ENCODE measurements at regions of chr7 and their contacts with region 1.

Region 1: DNA sequence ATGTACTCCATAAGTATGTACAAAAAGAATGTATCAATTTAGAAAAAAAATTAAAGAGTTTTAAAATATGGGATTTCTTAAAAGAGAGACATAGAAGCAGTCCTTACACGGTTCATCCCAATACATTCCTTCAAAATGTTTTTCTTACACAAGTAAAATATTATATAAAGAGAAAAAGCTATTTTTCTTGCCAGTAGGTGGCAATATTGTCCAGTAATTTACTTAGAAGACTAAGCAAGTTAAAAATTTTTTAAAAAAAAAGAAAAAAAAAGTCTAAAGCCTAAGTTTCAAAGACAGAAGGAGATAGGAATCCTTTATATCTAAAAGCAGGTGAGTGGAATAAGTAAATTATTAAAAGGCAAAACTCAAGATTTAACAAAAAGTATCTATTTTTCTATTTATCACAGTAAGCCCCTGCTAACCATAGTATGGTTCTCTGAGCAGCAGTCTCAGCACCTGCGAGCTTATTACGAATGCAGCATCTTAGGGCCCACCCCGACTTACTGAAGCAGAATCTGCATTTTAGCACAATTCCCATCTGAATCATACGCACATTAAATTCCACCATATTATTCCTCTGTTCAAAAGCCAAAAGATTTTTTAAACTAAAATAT is 240.6 kb downstream of the DGKI start:
- DNase-seq: no peak
- H3K4me3 ChIP-seq: no peak overlapping the region; a peak in 1 of 4 replicates
- H3K27ac ChIP-seq: no peak overlapping the region
- H3K4me1 ChIP-seq: no peaks in the 10 kb centered on the region; a peak in 1 of 4 replicates
- H3K27me3 ChIP-seq: no peaks in the 10 kb centered on the region
- CTCF ChIP-seq: peak; percentile 91
- EP300 ChIP-seq: no peak
- RAD21 ChIP-seq: peak; percentile 64

Region 2: DNA sequence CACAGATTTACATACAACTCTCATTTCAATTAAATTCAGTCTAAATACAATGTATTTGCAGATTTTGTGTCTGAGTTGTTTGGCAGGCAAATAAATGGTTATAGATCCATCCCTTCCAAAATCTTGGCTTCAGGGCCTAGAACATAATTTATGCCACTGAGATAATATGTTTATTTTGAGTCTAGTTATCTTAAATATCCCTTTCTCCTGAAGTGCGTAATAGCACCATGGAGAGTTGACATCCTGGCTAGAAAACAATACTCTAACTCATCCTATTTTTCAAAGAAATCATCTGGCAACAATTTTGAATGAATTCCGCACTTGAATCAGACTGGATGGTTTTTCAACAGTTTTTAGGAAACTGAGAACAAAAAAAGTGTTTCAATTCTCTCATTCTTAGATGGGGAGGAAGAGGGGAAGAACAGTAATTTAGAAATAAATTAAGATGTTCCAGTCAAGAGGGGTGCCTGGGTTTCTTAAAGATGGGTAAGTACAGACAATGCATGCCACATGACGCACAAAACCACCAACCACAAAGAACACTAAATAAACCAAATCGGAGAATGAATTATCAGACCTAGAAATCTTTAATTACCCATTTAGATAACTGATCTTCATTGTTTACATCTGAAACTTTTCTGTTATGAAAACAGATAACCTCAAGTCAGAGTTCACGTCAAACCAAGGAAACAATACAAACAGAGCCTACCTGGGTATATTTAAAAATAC is 33.9 kb before region 1 on chr7:
- CTCF ChIA-PET with region 1: no interaction called
- POLR2A ChIA-PET with region 1: no interaction called
- DNase-seq: no peak
- H3K4me3 ChIP-seq: no peak overlapping the region
- H3K27ac ChIP-seq: no peak overlapping the region
- H3K4me1 ChIP-seq: no peaks in the 10 kb centered on the region; a peak in 1 of 4 replicates
- H3K27me3 ChIP-seq: no peaks in the 10 kb centered on the region
- CTCF ChIP-seq: no peak
- EP300 ChIP-seq: no peak
- RAD21 ChIP-seq: no peak

Region 3: DNA sequence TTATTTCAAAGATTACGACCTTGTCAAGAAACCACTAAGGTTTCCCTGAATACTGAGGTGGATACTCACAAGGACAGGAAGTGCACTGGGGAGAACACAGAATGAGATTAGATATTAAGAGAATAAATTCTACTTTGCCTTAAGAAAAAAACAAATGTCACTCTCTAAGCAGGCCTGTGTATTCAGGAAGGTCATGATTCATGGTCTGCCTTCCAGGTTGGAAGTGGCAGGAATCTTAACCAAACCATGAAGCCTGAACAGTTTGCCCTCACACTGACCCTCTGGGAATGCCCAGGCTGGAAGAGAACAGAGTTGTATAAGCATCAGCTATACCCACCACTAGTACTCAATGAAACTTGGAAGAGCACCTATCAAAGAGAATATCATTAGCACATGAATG is 13.0 kb after region 1 on chr7:
- CTCF ChIA-PET with region 1: interaction called, 13 read pairs
- POLR2A ChIA-PET with region 1: no interaction called
- DNase-seq: no peak
- H3K4me3 ChIP-seq: no peak overlapping the region
- H3K27ac ChIP-seq: no peak overlapping the region
- H3K4me1 ChIP-seq: peaks cover 0 to 2% of the 10 kb centered on the region in 2 experiments; a peak in 2 of 4 replicates
- H3K27me3 ChIP-seq: no peaks in the 10 kb centered on the region
- CTCF ChIP-seq: no peak
- EP300 ChIP-seq: no peak
- RAD21 ChIP-seq: no peak

Measured in SK-N-SH (cell line).